Calu3 (cell line): ENCODE measurements at regions of chr22 and their contacts with region 1.

Region 1: GRCh38 chr22:35852076-35852475 is 134.4 kb downstream of the APOL5 start:
- DNase-seq: no peak
- H3K4me3 Mint-ChIP-seq: no peak overlapping the region
- H3K27ac Mint-ChIP-seq: no peak overlapping the region
- H3K4me1 Mint-ChIP-seq: no peaks in the 10 kb centered on the region
- H3K27me3 Mint-ChIP-seq: no peaks in the 10 kb centered on the region
- CTCF ChIP-seq: no peak

Region 2: DNA sequence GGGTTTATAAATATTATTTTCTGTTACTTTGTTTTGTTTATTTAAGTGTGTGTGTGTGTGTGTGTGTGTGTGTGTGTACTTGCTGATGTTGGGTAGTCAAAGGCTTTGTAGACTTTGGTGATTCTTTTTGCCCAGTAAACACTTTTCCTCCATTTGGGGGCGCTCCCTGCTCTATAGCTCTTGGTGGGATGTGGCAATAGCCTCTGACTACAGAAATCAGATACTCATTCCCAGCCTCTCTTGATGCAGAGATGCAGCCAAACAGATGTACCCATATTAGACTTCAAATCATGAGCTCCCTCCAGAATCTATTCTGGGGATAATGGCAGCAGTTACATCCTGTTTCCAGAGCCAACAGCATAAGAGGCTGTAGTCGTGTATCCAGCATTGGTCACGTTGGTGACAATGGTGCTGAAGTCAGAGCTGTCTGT is 167.8 kb before region 1 on chr22:
- CTCF ChIA-PET with region 1: no interaction called
- intact Hi-C with region 1: no loop called
- DNase-seq: peak; percentile 10
- H3K4me3 Mint-ChIP-seq: no peak overlapping the region
- H3K27ac Mint-ChIP-seq: no peak overlapping the region
- H3K4me1 Mint-ChIP-seq: no peaks in the 10 kb centered on the region
- H3K27me3 Mint-ChIP-seq: peaks cover 18% of the 10 kb centered on the region
- CTCF ChIP-seq: no peak

Region 3: GRCh38 chr22:35802885-35803284 is 49.2 kb before region 1 on chr22:
- CTCF ChIA-PET with region 1: interaction called, 11 read pairs
- intact Hi-C with region 1: no loop called
- DNase-seq: no peak
- H3K4me3 Mint-ChIP-seq: no peak overlapping the region
- H3K27ac Mint-ChIP-seq: peak overlapping the region; percentile 18
- H3K4me1 Mint-ChIP-seq: peaks cover 28% of the 10 kb centered on the region
- H3K27me3 Mint-ChIP-seq: no peaks in the 10 kb centered on the region
- CTCF ChIP-seq: no peak